ENCODE measurements at regions of chr3 and their contacts with region 1.

Region 1: DNA sequence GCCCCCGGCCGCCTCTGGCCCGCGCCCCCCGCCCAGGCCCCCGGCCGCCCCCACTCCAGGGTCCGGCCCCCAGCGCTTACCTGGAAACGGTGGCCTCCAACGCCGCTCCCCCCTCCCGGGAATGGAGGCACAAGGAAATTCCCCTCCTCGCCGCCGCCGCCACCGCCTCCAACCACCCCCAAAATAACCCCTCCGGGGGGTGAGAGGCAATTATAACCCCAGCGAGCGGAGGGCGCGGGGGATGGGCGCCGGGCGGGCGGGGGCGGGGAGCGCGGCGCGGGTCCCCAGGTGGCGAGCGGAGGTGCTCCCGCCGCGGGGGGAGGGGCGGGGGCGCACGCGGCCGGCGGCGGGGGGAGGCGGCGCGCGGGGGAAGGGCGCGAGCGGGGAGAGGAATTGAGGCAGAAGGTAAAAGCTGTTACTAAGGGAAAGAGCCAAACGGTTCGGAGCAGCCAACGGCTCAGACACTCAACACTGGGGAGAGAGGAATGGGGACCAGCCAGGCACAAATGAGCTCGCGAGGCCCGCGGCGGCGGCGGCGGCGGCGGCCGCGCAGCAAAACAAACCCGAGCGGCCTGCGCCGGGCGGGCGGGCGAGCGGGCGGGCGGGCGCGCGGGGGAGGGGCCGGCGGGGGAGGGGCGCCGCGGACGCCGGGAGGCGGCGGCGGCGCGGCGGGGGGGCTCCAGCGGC is at the start of gene TBL1XR1:
- DNase-seq: peak; percentile 92 to 97 (median 97)
- H3K4me3 ChIP-seq: peak within 1 kb of the TSS; percentile 66 to 97 (median 93)
- H3K27ac ChIP-seq: peak within 1 kb of the TSS; percentile 93 to 95
- H3K4me1 ChIP-seq: peaks cover 24 to 40% (median 34%) of the 10 kb centered on the region in 4 experiments
- H3K27me3 ChIP-seq: no peaks in the 10 kb centered on the region

Region 2: GRCh38 chr3:177359593-177360357 is 162.6 kb after region 1 on chr3:
- CTCF ChIA-PET with region 1: interaction called, 31 read pairs
- POLR2A ChIA-PET with region 1: interaction called, 16 read pairs
- DNase-seq: peak; percentile 96 to 98 (median 98)
- H3K4me3 ChIP-seq: peak overlapping the region in 6 of 7 experiments; percentile 57 to 85 (median 70)
- H3K27ac ChIP-seq: peak overlapping the region; percentile 86 to 95
- H3K4me1 ChIP-seq: peaks cover 28 to 61% (median 52%) of the 10 kb centered on the region in 4 experiments
- H3K27me3 ChIP-seq: no peaks in the 10 kb centered on the region

Region 3: GRCh38 chr3:177385831-177386301 is 188.7 kb after region 1 on chr3:
- CTCF ChIA-PET with region 1: no interaction called
- POLR2A ChIA-PET with region 1: no interaction called
- DNase-seq: no peak
- H3K4me3 ChIP-seq: no peak overlapping the region
- H3K27ac ChIP-seq: no peak overlapping the region
- H3K4me1 ChIP-seq: no peaks in the 10 kb centered on the region
- H3K27me3 ChIP-seq: no peaks in the 10 kb centered on the region

Measured in common myeloid progenitor, CD34-positive (primary cell).